ENCODE measurements at regions of chr18 and their contacts with region 1.

Region 1: DNA sequence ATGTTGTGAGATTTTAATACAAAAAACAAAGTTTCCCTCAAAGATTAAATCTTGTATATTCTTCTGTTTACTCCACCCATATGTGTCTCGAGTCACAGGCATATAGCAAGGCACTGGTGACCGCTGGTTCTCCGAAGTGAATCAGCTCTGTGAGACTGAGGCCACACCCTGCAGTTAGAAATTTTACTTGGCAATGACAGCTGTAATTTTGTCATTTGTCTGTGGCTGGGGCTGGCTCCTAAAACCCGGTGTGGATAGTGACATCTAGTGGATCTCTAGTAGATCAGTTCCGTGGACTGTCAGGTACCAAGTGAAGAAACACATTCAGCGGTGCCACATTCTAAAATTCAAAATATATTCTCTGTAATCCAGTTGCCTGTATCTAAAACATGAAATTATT is 278.0 kb downstream of the NEDD4L start:
- DNase-seq: peak; percentile 71
- H3K4me3 Mint-ChIP-seq: no peak overlapping the region
- H3K27ac Mint-ChIP-seq: no peak overlapping the region
- H3K4me1 Mint-ChIP-seq: peaks cover 15% of the 10 kb centered on the region
- H3K27me3 Mint-ChIP-seq: peaks cover 1% of the 10 kb centered on the region

Region 2: DNA sequence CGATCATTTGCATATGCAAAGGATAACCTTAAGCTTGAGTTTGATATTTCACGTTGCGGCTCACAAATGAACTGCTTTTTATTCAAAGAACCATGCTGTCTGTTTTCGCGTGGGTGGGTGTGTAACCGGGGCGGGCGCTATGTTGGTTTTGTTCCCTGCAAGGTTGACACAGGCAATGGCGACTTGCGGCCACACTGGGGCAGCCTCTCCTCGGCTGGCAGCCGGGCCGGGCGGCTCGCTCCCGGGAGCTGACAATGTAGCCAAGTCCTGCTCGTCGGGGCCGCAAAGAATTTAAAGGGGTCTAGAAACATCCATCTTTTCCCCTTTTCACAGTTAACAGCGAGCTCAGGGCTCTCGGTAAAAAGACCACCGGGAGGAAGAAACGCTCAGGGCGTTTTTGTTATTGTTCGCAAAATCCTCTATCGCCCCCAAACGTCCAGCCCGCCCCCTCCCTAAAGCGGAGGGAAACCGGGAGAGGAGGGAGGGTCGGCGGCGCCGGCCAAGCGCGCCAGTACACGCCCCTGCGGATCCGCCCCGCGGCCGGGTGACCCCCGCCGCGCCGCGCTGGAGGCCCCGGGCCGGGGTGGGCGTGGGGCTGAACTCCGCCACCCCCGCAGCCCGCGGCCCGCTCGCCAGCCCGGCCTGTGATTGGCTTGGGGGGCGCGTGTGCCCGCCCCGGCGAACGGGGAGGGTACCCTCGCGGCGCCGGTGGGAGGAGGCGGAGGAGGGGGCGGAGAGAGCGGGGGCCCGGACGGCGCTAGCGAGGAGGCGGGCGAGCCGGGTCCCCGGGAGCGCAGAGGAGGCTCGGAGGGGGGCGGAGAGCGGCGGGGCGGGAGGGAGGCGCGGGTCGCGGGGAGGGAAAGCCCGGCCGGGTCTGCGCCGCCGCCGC is 278.3 kb before region 1 on chr18 and contains the start of gene NEDD4L:
- CTCF ChIA-PET with region 1: interaction called, 7 read pairs
- POLR2A ChIA-PET with region 1: no interaction called
- intact Hi-C with region 1: loop called (anchors 1 kb)
- DNase-seq: peak; percentile 89
- H3K4me3 Mint-ChIP-seq: peak within 1 kb of the TSS; percentile 86
- H3K27ac Mint-ChIP-seq: peak within 1 kb of the TSS; percentile 26
- H3K4me1 Mint-ChIP-seq: peaks cover 20% of the 10 kb centered on the region
- H3K27me3 Mint-ChIP-seq: peaks cover 25% of the 10 kb centered on the region
- total RNA-seq, gene NEDD4L: 3.4 to 3.8 TPM

Region 3: GRCh38 chr18:58135701-58136331 is 186.2 kb before region 1 on chr18:
- CTCF ChIA-PET with region 1: interaction called, 3 read pairs
- POLR2A ChIA-PET with region 1: no interaction called
- intact Hi-C with region 1: loop called (anchors 5 kb)
- DNase-seq: peak; percentile 69
- H3K4me3 Mint-ChIP-seq: no peak overlapping the region
- H3K27ac Mint-ChIP-seq: no peak overlapping the region
- H3K4me1 Mint-ChIP-seq: peaks cover 9% of the 10 kb centered on the region
- H3K27me3 Mint-ChIP-seq: peaks cover 14% of the 10 kb centered on the region

Region 4: DNA sequence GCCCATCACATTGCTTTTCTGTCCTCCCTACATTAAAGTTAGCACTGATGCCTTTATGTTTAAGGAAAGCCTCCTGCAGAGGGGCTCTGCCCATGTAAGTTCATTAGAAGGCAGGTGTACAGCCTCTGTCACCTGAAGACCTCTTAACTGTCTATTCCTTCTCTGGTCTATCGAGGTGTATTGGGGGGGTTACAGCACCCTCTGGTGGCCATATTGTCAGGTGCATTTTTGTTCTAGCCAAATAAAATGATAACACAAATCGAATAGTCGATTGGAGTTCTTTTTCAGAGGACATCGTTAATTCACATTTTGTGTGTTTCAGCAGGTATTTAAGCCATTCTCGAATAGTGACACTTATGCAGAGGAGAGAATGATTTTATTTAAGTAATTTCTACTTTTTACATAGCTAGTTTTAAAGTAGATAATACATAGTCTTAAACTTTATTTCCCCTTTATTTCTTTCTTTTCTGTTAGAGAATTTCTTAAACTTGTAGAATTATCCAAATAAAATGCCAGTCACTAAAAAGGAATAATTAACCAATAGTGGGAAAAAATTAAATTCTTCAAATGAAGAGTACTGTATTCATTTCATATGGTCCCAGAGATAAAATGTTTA is 141.1 kb before region 1 on chr18:
- CTCF ChIA-PET with region 1: interaction called, 6 read pairs
- POLR2A ChIA-PET with region 1: no interaction called
- intact Hi-C with region 1: loop called (anchors 1 kb)
- DNase-seq: peak; percentile 71
- H3K4me3 Mint-ChIP-seq: no peak overlapping the region
- H3K27ac Mint-ChIP-seq: no peak overlapping the region
- H3K4me1 Mint-ChIP-seq: no peaks in the 10 kb centered on the region
- H3K27me3 Mint-ChIP-seq: peaks cover 2% of the 10 kb centered on the region

Region 5: GRCh38 chr18:58195278-58195765 is 126.7 kb before region 1 on chr18:
- CTCF ChIA-PET with region 1: interaction called, 4 read pairs
- POLR2A ChIA-PET with region 1: no interaction called
- intact Hi-C with region 1: loop called (anchors 5 kb)
- DNase-seq: peak; percentile 24
- H3K4me3 Mint-ChIP-seq: peak overlapping the region; percentile 59
- H3K27ac Mint-ChIP-seq: no peak overlapping the region
- H3K4me1 Mint-ChIP-seq: peaks cover 21% of the 10 kb centered on the region
- H3K27me3 Mint-ChIP-seq: peaks cover 14% of the 10 kb centered on the region

Region 6: GRCh38 chr18:58303363-58303762 is 18.6 kb before region 1 on chr18:
- CTCF ChIA-PET with region 1: interaction called, 8 read pairs
- POLR2A ChIA-PET with region 1: interaction called, 3 read pairs
- intact Hi-C with region 1: loop called (anchors 2 kb)
- DNase-seq: peak; percentile 51
- H3K4me3 Mint-ChIP-seq: no peak overlapping the region
- H3K27ac Mint-ChIP-seq: no peak overlapping the region
- H3K4me1 Mint-ChIP-seq: peaks cover 31% of the 10 kb centered on the region
- H3K27me3 Mint-ChIP-seq: peaks cover 3% of the 10 kb centered on the region

Region 7: GRCh38 chr18:58493516-58494253 is 171.7 kb after region 1 on chr18:
- CTCF ChIA-PET with region 1: no interaction called
- POLR2A ChIA-PET with region 1: no interaction called
- intact Hi-C with region 1: loop called (anchors 10 kb)
- DNase-seq: peak; percentile 85
- H3K4me3 Mint-ChIP-seq: no peak overlapping the region
- H3K27ac Mint-ChIP-seq: peak overlapping the region; percentile 11
- H3K4me1 Mint-ChIP-seq: peaks cover 6% of the 10 kb centered on the region
- H3K27me3 Mint-ChIP-seq: peaks cover 30% of the 10 kb centered on the region